BJ (cell line): ENCODE measurements at regions of chr19 and their contacts with region 1.

Region 1: DNA sequence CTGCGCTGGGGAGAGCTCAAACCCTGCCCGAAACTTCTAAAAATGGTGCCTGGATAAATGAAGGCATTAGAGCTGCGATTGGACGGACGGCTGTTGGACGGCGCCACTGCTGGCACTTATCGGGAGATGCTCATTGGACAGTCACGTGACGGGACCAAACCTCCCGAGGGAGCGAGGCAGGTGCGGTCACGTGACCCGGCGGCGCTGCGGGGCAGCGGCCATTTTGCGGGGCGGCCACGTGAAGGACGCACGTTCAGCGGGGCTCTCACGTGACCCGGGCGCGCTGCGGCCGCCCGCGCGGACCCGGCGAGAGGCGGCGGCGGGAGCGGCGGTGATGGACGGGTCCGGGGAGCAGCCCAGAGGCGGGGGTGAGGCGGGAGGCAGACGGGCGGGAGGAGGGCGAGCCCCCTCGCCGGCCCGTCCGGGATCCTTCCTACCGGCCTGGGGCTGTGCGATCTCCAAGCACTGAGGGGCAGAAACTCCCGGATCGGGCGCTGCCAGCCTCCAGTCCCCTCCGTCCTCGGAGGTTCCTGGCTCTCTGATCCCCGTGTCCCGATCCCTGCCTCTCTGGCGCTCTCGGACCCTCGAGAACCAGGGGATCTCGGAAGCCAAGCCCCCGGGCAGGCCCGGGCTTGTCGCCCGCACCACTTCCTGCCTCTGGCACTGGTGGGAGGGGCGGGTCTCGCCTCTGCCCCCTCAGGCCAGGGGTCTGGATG is at the start of gene BAX:
- DNase-seq: peak; percentile 68
- H3K4me3 ChIP-seq: peak within 1 kb of the TSS; percentile 95
- H3K27me3 ChIP-seq: no peaks in the 10 kb centered on the region
- CTCF ChIP-seq: no peak
- polyA plus RNA-seq, gene BAX: 141 and 159 TPM in 2 replicates

Region 2: DNA sequence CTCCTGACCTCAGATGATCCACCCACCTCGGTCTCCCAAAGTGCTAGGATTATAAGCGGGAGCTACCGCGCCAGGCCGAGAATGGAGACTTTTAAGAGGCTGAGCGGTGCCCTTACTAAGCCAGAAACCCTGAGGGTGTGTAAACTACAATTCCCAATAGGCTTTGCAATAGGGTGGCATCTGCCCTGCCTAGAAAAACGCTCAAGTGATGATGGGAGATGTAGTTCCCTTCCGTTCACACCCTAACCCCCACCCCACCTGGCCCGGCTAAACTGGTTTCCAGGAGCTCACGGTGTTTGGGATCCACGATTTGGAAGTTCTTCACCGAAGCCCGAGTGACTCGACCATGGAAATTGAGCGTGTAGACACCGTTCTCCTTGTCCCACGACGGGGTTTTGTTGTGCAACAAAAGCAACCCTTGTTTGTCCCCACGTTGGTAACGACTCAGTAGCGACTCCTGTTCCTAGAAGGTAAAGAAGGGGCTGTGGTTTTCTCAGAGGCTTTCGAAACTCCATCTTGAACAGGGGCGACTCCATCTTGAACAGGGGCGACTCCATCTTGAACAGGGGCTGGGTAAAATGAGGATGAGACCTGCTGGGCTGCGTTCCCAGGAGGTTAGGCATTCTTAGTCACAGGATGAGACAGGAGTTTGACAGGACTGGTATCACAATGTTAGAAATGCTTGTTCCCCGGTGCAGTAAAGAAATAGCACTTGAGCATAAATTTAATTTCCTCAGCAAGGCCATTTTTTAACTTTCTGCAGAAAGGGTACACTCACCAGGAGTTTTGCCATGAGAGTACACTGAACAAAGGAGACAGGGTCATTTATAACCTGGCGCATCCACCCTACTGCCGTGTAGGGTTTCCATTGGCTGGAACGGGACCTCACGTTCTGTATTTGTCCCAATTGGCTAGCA is 72.8 kb before region 1 on chr19:
- CTCF ChIA-PET with region 1: no interaction called
- POLR2A ChIA-PET with region 1: interaction called, 13 read pairs
- DNase-seq: no peak
- H3K4me3 ChIP-seq: no peak overlapping the region
- H3K27me3 ChIP-seq: no peaks in the 10 kb centered on the region
- CTCF ChIP-seq: no peak

Region 3: DNA sequence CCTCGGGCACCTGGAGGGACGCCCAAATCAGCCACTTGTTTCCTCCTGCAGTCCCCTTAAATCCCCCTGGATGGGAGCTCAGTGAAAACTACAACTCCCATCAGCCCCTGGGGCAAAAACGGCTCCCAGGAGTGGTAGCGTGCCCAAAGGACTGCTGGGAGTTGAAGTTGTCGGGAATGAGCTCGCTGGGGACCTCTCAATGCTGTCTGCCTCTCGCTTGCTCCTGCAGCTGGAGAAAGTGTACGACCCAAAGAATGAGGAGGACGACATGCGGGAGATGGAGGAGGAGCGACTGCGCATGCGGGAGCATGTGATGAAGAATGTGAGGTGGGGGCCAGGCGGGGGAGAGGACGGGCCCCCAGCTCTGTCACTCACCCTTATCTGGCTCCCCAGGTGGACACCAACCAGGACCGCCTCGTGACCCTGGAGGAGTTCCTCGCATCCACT is 35.9 kb before region 1 on chr19:
- CTCF ChIA-PET with region 1: no interaction called
- POLR2A ChIA-PET with region 1: no interaction called
- DNase-seq: no peak
- H3K4me3 ChIP-seq: no peak overlapping the region
- H3K27me3 ChIP-seq: no peaks in the 10 kb centered on the region
- CTCF ChIP-seq: no peak

Region 4: DNA sequence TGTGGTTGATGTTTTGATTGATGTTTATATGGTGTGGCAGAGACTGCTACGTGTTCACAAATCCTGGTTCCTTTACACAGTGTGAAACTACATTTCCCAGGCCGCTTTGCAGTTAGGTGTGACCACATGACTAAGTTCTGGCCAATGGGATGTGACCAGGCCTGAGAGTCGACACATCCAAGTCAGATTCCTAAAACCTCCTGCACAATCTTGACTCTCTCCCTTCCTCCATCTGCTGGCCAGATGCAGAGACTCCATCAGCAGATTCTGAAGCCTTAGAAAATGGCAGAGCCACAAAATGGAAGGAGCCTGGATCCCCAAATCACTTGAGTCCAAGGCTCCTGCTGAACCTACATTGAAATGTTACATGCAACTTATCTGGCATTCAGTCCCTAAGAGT is 393.1 kb after region 1 on chr19:
- CTCF ChIA-PET with region 1: no interaction called
- POLR2A ChIA-PET with region 1: no interaction called
- DNase-seq: peak; percentile 65
- H3K4me3 ChIP-seq: no peak overlapping the region
- H3K27me3 ChIP-seq: no peaks in the 10 kb centered on the region
- CTCF ChIP-seq: peak; percentile 27; the same call in 1 of the 2 replicates